Endothelial cell of umbilical vein (primary cell): ENCODE measurements at regions of chr12 and their contacts with region 1.

Region 1: GRCh38 chr12:79302162-79302814 is 388.5 kb downstream of the PAWR start:
- DNase-seq: peak; percentile 95
- H3K4me3 ChIP-seq: no peak overlapping the region
- H3K27ac ChIP-seq: peak overlapping the region; percentile 87
- H3K4me1 ChIP-seq: peaks cover 32% of the 10 kb centered on the region
- H3K27me3 ChIP-seq: no peaks in the 10 kb centered on the region
- CTCF ChIP-seq: no peak
- POLR2A ChIP-seq: peak; percentile 86

Region 2: DNA sequence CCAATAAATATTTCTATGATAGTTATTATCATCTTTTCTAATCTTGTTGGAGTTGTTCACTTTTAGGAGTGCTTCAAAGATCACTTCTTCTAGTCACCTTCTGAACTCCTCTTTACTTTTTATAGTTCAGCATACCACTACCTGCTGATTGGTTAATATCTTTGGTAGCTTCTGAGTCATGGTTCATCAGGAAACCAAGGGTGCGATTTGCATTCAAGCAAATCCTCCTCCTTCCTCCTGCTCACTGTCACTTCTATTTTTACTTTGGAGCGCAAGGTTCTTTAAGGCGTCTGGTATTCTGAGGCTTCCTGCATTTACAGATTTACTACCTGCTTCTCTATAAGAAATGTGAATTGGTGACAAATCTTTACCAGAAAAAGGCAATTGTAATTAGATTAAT is 413.7 kb before region 1 on chr12:
- CTCF ChIA-PET with region 1: no interaction called
- POLR2A ChIA-PET with region 1: no interaction called
- dilution Hi-C with region 1: no loop called
- intact Hi-C with region 1: loop called (anchors 1 kb)
- DNase-seq: no peak
- H3K4me3 ChIP-seq: no peak overlapping the region
- H3K27ac ChIP-seq: peak overlapping the region; percentile 11
- H3K4me1 ChIP-seq: peaks cover 29% of the 10 kb centered on the region
- H3K27me3 ChIP-seq: no peaks in the 10 kb centered on the region
- CTCF ChIP-seq: no peak
- POLR2A ChIP-seq: no peak

Region 3: DNA sequence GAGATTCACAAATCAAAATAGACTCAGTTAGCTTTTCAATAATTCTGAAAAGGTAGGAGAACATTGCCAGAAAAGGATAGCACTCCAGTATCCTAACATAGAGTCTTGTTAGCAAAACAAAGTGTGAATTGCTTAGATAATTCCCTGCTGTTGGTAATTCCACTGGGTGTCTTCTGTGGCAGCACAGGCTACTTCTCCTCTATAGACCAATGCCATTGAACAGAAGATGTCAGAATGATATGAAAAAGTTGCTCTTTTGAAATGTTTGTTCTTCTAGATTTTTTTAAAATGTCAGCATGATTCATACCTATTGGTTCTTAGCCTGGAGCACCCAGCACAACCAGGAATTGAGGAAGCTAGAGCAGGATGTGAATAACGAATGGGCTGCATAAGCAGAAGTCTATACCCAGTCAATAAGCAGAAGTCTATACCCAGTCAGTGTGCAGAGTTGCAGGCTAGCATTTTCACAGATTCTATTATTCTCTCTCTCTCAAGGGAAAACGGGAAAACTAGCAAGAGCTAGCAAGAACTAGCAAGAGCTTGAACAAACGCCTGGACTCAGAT is 324.9 kb before region 1 on chr12:
- CTCF ChIA-PET with region 1: no interaction called
- POLR2A ChIA-PET with region 1: no interaction called
- dilution Hi-C with region 1: no loop called
- intact Hi-C with region 1: no loop called
- DNase-seq: no peak
- H3K4me3 ChIP-seq: no peak overlapping the region
- H3K27ac ChIP-seq: no peak overlapping the region
- H3K4me1 ChIP-seq: no peaks in the 10 kb centered on the region
- H3K27me3 ChIP-seq: no peaks in the 10 kb centered on the region
- CTCF ChIP-seq: no peak
- POLR2A ChIP-seq: no peak

Region 4: DNA sequence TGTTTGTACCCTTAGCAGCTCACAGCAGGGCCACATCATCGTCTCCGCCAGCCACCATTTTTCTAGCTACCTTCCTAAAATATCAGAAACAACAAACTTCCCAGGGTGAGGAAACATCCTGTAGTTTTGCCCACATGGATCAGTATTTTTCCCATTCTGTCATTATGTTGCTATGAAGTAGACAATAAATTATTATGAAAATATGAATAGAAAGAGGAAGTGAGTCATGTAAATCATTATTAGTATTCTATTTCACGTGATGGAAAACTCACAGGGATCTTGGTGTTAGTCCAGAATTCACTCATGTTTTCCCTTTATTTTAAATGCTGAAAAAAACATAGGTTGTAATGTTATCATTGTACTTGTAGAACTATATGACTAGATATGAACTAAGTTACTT is 118.4 kb before region 1 on chr12:
- CTCF ChIA-PET with region 1: no interaction called
- POLR2A ChIA-PET with region 1: no interaction called
- dilution Hi-C with region 1: no loop called
- intact Hi-C with region 1: loop called (anchors 1 kb)
- DNase-seq: peak; percentile 98
- H3K4me3 ChIP-seq: no peak overlapping the region
- H3K27ac ChIP-seq: peak overlapping the region; percentile 99
- H3K4me1 ChIP-seq: peaks cover 19% of the 10 kb centered on the region
- H3K27me3 ChIP-seq: no peaks in the 10 kb centered on the region
- CTCF ChIP-seq: no peak
- POLR2A ChIP-seq: no peak

Region 5: DNA sequence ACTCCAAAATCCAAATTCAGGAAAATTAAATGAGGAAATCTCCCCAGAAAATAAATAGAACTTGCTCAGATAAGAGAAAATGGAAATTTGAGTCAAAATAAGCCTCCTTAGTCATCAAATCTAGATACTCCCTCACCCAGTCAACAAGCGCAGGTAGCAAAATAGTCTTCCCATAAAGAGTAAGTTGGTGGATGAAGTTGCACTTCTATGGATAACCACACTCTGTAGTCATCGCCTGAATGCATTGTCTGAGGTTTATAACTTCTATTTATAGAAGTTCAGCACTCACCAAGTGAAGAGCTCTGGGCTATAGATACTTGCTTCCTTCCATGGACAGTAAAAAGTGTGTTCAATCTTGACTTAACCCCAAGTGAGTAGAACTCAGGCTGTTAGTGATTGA is 50.9 kb before region 1 on chr12:
- CTCF ChIA-PET with region 1: no interaction called
- POLR2A ChIA-PET with region 1: no interaction called
- dilution Hi-C with region 1: no loop called
- intact Hi-C with region 1: loop called (anchors 2 kb)
- DNase-seq: no peak
- H3K4me3 ChIP-seq: no peak overlapping the region
- H3K27ac ChIP-seq: no peak overlapping the region
- H3K4me1 ChIP-seq: peaks cover 3% of the 10 kb centered on the region
- H3K27me3 ChIP-seq: peaks cover 0 to 1% of the 10 kb centered on the region in 2 experiments
- CTCF ChIP-seq: no peak
- POLR2A ChIP-seq: no peak

Region 6: DNA sequence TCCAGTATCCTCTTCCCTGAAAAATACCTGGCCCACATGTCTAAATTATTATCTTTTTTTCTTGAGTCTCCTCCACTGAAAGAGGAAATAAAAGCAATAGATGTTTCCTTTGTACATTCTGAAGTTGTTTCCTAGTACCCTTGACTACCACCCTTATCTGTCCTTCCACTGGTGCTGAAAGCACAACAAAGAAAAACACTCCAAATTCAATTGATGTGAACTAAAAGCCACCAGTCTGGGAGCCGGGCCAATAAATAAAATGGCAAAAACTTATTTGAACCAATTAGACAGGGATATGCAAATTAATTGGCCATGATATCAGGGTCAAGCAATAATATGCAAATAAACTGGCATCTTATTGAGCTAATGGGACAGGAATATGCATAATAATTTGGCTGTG is 58.0 kb after region 1 on chr12:
- CTCF ChIA-PET with region 1: no interaction called
- POLR2A ChIA-PET with region 1: no interaction called
- dilution Hi-C with region 1: no loop called
- intact Hi-C with region 1: loop called (anchors 1 kb)
- DNase-seq: peak; percentile 81
- H3K4me3 ChIP-seq: no peak overlapping the region
- H3K27ac ChIP-seq: no peak overlapping the region
- H3K4me1 ChIP-seq: peaks cover 8% of the 10 kb centered on the region
- H3K27me3 ChIP-seq: no peaks in the 10 kb centered on the region
- CTCF ChIP-seq: no peak
- POLR2A ChIP-seq: no peak

Region 7: GRCh38 chr12:79407671-79408622 is 105.7 kb after region 1 on chr12:
- CTCF ChIA-PET with region 1: no interaction called
- POLR2A ChIA-PET with region 1: no interaction called
- dilution Hi-C with region 1: no loop called
- intact Hi-C with region 1: no loop called
- DNase-seq: peak; percentile 88
- H3K4me3 ChIP-seq: no peak overlapping the region
- H3K27ac ChIP-seq: peak overlapping the region; percentile 25
- H3K4me1 ChIP-seq: peaks cover 9% of the 10 kb centered on the region
- H3K27me3 ChIP-seq: no peaks in the 10 kb centered on the region
- CTCF ChIP-seq: peak; percentile 72 to 86
- POLR2A ChIP-seq: no peak